ENCODE measurements at regions of chr7 and their contacts with region 1.

Region 1: DNA sequence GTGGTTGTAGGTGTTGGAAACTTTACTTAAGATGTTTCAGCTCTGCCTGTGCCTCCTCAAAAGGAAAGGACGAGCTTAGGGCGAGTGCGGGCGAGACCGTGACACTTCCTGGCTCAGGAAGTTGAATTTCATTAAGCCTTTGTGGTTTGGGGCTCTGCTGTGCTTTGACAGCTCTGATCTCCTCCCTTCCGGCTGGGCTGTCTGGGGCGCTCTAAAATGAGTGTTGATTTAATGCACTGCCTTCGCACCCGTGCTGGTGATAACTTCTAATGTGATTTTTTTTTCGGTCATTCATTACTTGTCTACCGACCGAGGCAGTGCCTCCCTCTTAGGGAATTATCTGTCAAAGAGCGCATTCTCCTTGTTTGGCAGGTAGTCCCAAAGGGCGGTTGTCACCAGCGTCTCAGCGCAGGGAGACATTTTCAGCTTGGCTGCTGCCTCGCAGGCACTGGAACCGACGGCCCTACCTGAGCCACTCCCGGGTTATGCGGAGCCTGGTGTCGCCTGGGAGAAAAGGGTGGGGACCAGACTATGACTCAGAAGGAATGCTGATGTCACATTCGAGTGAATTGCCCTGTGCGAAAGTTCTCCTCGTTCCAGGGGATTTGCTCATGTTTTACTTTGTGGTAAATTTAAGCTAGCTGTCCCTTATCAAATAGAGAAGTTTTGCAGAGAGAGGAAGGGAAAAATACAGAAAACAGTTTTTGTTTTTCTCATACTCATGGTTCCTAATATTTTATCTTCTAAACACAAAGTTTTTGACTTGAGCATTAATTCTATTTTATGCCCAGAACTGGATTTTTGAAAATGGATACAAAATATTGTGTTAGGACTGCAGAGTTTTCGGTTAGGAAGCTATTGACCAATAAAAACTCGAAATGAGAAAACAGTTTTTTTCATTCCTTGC is 920 bp downstream of the TES start:
- DNase-seq: peak; percentile 69 to 86 (median 86)
- H3K4me3 ChIP-seq: peak overlapping the region; percentile 83
- H3K4me3 Mint-ChIP-seq: peak overlapping the region; percentile 91 to 99 (median 97)
- H3K27ac ChIP-seq: peak overlapping the region; percentile 89
- H3K27ac Mint-ChIP-seq: peak overlapping the region; percentile 95 to 99 (median 98)
- H3K4me1 ChIP-seq: peaks cover 52% of the 10 kb centered on the region
- H3K4me1 Mint-ChIP-seq: peaks cover 49 to 64% (median 60%) of the 10 kb centered on the region in 3 donors
- H3K27me3 ChIP-seq: no peaks in the 10 kb centered on the region
- H3K27me3 Mint-ChIP-seq: no peaks in the 10 kb centered on the region

Region 2: GRCh38 chr7:116180302-116180701 is 31.0 kb before region 1 on chr7:
- CTCF ChIA-PET with region 1: interaction called, 40 read pairs
- POLR2A ChIA-PET with region 1: interaction called, 7 read pairs
- DNase-seq: peak in 3 of 5 donors; percentile 9 to 58 (median 47)
- H3K4me3 ChIP-seq: no peak overlapping the region
- H3K4me3 Mint-ChIP-seq: no peak overlapping the region
- H3K27ac ChIP-seq: no peak overlapping the region
- H3K27ac Mint-ChIP-seq: no peak overlapping the region
- H3K4me1 ChIP-seq: no peaks in the 10 kb centered on the region
- H3K4me1 Mint-ChIP-seq: peaks cover 6 to 10% (median 9%) of the 10 kb centered on the region in 3 donors
- H3K27me3 ChIP-seq: no peaks in the 10 kb centered on the region
- H3K27me3 Mint-ChIP-seq: peaks cover 3 to 4% of the 10 kb centered on the region in 2 donors

Region 3: DNA sequence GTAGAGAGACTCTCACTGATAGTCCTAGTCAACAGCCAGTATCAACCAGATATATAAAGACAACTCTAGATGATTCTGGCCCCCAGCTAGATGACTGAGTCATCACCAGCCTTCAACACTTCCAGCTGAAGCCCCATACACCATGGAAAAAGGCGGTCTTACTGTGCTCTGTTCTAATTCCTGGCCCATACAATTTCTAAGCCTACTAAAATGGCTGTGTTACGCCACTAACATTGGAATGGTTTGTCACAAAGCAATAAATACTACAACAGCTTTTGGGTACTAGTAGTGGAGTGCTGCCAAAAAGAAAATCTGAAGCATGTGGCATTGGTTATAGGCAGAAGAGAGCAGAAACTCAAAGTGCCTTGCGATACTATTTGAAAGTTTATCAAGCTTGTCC is 13.9 kb before region 1 on chr7:
- CTCF ChIA-PET with region 1: interaction called, 27 read pairs
- POLR2A ChIA-PET with region 1: no interaction called
- DNase-seq: no peak
- H3K4me3 ChIP-seq: no peak overlapping the region
- H3K4me3 Mint-ChIP-seq: no peak overlapping the region
- H3K27ac ChIP-seq: no peak overlapping the region
- H3K27ac Mint-ChIP-seq: no peak overlapping the region
- H3K4me1 ChIP-seq: no peaks in the 10 kb centered on the region
- H3K4me1 Mint-ChIP-seq: no peaks in the 10 kb centered on the region
- H3K27me3 ChIP-seq: no peaks in the 10 kb centered on the region
- H3K27me3 Mint-ChIP-seq: peaks cover 0 to 4% of the 10 kb centered on the region in 2 donors

Region 4: GRCh38 chr7:116224492-116225098 is 13.3 kb after region 1 on chr7:
- CTCF ChIA-PET with region 1: interaction called, 71 read pairs
- POLR2A ChIA-PET with region 1: interaction called, 12 read pairs
- DNase-seq: no peak
- H3K4me3 ChIP-seq: peak overlapping the region; percentile 14
- H3K4me3 Mint-ChIP-seq: peak overlapping the region in 6 of 7 donors; percentile 48 to 79 (median 74)
- H3K27ac ChIP-seq: no peak overlapping the region
- H3K27ac Mint-ChIP-seq: peak overlapping the region; percentile 0 to 85 (median 60)
- H3K4me1 ChIP-seq: peaks cover 84% of the 10 kb centered on the region
- H3K4me1 Mint-ChIP-seq: peaks cover 88 to 96% (median 94%) of the 10 kb centered on the region in 3 donors
- H3K27me3 ChIP-seq: no peaks in the 10 kb centered on the region
- H3K27me3 Mint-ChIP-seq: no peaks in the 10 kb centered on the region

Region 5: GRCh38 chr7:116271161-116271913 is 60.1 kb after region 1 on chr7:
- CTCF ChIA-PET with region 1: no interaction called
- POLR2A ChIA-PET with region 1: no interaction called
- DNase-seq: no peak
- H3K4me3 ChIP-seq: no peak overlapping the region
- H3K4me3 Mint-ChIP-seq: no peak overlapping the region
- H3K27ac ChIP-seq: no peak overlapping the region
- H3K27ac Mint-ChIP-seq: no peak overlapping the region
- H3K4me1 ChIP-seq: no peaks in the 10 kb centered on the region
- H3K4me1 Mint-ChIP-seq: no peaks in the 10 kb centered on the region
- H3K27me3 ChIP-seq: no peaks in the 10 kb centered on the region
- H3K27me3 Mint-ChIP-seq: peaks cover 11 to 34% of the 10 kb centered on the region in 2 donors